Mammary epithelial cell (primary cell): ENCODE measurements at regions of chr2 and their contacts with region 1.

Region 1: DNA sequence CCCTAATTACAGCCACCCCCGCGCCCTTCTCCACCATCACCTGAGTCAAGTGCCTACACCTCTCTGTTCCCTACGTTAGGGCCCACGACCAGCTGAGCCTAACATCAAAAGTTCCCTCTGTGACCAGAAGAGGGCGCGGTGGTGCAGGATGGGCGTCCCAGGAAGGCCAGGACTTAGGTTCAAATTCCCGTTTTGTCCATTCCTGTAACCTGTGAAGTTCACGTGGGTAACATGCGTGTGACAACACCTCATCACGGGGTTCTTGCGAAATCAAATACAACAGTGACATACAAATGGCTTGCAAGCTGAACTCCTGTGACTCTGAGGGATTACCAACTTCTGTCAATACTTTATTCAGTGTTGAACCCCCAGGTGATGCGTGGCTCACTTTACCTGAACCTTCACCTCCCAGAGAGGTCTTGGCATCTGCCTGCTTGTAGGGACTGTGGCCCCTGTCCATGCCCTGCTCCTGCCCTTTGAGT is 207.9 kb downstream of the ARL4C start:
- DNase-seq: peak; percentile 24
- H3K4me3 ChIP-seq: no peak overlapping the region
- H3K27ac ChIP-seq: no peak overlapping the region
- H3K4me1 ChIP-seq: peaks cover 32% of the 10 kb centered on the region
- H3K27me3 ChIP-seq: no peaks in the 10 kb centered on the region
- CTCF ChIP-seq: peak; percentile 61 to 78

Region 2: DNA sequence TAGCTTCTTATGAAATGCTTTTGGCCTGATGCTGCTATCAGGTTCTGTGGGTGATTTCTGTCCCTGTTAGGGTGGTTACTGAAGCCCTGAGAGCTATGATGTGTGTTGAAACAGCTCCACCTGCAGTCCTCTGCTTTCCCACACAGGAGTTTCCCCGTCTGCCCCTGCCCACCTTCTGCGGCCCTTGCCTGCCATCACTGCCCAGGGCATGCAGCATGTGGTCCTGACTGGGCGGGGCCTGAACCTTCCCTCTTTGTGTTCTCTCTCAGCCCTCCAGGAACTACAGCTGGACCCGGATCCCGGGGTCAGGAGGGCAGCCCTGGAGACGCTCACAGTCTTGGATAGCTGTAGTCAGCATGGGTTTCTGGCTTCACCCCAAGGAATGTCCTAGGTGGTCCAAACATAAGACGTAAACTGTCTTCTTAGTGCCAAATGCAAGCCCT is 456.1 kb before region 1 on chr2:
- CTCF ChIA-PET with region 1: no interaction called
- dilution Hi-C with region 1: no loop called
- in situ Hi-C with region 1: no loop called
- intact Hi-C with region 1: no loop called
- DNase-seq: peak; percentile 63
- H3K4me3 ChIP-seq: no peak overlapping the region
- H3K27ac ChIP-seq: no peak overlapping the region
- H3K4me1 ChIP-seq: peaks cover 18% of the 10 kb centered on the region
- H3K27me3 ChIP-seq: no peaks in the 10 kb centered on the region
- CTCF ChIP-seq: peak; percentile 12 to 53

Region 3: GRCh38 chr2:234544659-234545611 is 255.9 kb after region 1 on chr2:
- CTCF ChIA-PET with region 1: no interaction called
- dilution Hi-C with region 1: no loop called
- in situ Hi-C with region 1: no loop called
- intact Hi-C with region 1: loop called (anchors 5 kb)
- DNase-seq: peak; percentile 47
- H3K4me3 ChIP-seq: no peak overlapping the region
- H3K27ac ChIP-seq: no peak overlapping the region
- H3K4me1 ChIP-seq: peaks cover 6% of the 10 kb centered on the region
- H3K27me3 ChIP-seq: no peaks in the 10 kb centered on the region
- CTCF ChIP-seq: peak; percentile 87 to 92